ENCODE measurements at regions of chr7 and their contacts with region 1.

Region 1: DNA sequence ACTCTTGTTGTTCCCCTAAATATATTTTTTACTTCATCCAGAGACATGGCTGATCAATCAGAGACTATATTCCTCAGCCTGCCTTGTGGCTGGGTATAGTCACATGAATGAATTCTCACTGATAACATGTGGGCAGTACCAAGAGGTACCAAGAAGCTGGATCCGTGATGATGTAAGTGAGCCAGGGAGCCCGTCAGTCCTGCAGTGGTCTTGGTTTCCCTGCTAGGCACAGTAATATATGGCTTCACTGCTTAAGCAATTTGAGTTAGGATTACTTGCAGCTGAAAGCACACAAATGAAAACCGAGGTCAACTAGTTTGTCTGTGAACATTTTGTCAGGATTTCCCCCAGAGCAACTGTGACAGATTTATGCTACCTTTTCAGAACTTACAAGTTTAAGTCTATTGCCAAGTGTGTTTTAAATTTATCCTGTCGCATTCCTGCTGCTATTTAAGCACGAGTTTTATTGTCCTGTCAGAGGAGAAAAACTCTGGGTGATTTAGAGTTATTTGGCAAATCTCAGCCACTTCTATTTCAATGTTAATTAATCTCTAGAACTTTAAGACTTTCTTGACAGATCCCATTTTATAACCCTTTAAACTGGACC is 381.8 kb downstream of the PHF14 start:
- DNase-seq: no peak
- ATAC-seq: no peak
- H3K4me3 ChIP-seq: no peak overlapping the region
- H3K4me3 Mint-ChIP-seq: no peak overlapping the region
- H3K27ac ChIP-seq: no peak overlapping the region
- H3K27ac Mint-ChIP-seq: no peak overlapping the region
- H3K4me1 ChIP-seq: no peaks in the 10 kb centered on the region
- H3K4me1 Mint-ChIP-seq: no peaks in the 10 kb centered on the region
- H3K27me3 ChIP-seq: peaks cover 0 to 7% (median 0%) of the 10 kb centered on the region in 4 experiments
- H3K27me3 Mint-ChIP-seq: peaks cover 10% of the 10 kb centered on the region
- CTCF ChIP-seq: no peak

Region 2: DNA sequence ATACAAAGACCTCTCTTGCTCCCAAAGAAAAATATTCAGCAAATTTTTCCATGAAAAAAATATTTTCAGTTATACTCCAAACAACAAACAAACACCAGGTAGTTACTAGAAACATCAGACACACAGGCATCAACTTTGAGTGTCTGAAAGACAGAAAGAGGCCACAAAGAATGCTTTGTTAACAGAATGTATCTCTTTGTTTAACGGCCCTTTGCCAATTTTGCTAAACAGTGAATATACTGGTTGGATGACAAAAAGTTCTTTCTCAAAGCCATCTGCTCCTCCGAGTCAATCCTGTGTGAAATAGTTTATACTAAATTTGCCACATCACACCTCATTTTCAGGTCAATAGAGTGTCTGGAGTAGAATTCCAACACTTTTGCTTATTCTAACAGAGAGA is 598.5 kb before region 1 on chr7:
- CTCF ChIA-PET with region 1: no interaction called
- POLR2A ChIA-PET with region 1: no interaction called
- intact Hi-C with region 1: no loop called
- DNase-seq: no peak
- ATAC-seq: no peak
- H3K4me3 ChIP-seq: no peak overlapping the region
- H3K4me3 Mint-ChIP-seq: no peak overlapping the region
- H3K27ac ChIP-seq: no peak overlapping the region
- H3K27ac Mint-ChIP-seq: no peak overlapping the region
- H3K4me1 ChIP-seq: no peaks in the 10 kb centered on the region
- H3K4me1 Mint-ChIP-seq: no peaks in the 10 kb centered on the region
- H3K27me3 ChIP-seq: no peaks in the 10 kb centered on the region
- H3K27me3 Mint-ChIP-seq: no peaks in the 10 kb centered on the region
- CTCF ChIP-seq: no peak

Region 3: DNA sequence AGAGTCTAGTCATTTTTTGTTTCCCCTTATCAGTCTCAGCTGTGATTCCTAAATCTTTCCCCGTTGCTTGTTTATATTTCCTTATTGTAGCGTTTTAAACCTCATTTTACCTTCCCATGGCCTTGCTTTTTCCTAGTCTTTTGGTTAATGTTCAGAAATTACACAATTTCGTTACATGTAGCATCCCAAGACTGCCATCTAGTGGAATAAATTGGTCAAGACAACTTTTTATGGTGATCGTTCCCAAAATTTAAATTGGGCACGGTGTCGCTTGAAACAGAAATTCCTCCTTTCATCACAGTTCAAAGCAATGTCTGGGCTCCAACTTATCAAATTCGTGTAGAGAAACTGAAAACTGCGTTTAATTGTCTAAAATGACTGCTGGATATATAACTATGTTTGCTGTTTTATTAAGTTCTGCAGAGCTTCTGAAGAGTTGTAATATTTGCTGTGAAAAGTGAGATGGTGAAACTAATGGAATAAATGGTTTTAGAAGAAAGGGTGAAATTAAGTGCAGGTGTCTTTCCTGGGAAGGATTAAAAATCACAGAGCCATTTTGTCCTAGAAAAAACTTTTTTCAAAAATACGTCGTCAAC is 11.6 kb before region 1 on chr7:
- CTCF ChIA-PET with region 1: interaction called, 10 read pairs
- POLR2A ChIA-PET with region 1: no interaction called
- intact Hi-C with region 1: no loop called
- DNase-seq: peak; percentile 51
- ATAC-seq: peak; percentile 21
- H3K4me3 ChIP-seq: no peak overlapping the region
- H3K4me3 Mint-ChIP-seq: no peak overlapping the region
- H3K27ac ChIP-seq: no peak overlapping the region
- H3K27ac Mint-ChIP-seq: no peak overlapping the region
- H3K4me1 ChIP-seq: no peaks in the 10 kb centered on the region
- H3K4me1 Mint-ChIP-seq: peaks cover 2% of the 10 kb centered on the region
- H3K27me3 ChIP-seq: no peaks in the 10 kb centered on the region
- H3K27me3 Mint-ChIP-seq: peaks cover 4% of the 10 kb centered on the region
- CTCF ChIP-seq: peak; percentile 96

Region 4: DNA sequence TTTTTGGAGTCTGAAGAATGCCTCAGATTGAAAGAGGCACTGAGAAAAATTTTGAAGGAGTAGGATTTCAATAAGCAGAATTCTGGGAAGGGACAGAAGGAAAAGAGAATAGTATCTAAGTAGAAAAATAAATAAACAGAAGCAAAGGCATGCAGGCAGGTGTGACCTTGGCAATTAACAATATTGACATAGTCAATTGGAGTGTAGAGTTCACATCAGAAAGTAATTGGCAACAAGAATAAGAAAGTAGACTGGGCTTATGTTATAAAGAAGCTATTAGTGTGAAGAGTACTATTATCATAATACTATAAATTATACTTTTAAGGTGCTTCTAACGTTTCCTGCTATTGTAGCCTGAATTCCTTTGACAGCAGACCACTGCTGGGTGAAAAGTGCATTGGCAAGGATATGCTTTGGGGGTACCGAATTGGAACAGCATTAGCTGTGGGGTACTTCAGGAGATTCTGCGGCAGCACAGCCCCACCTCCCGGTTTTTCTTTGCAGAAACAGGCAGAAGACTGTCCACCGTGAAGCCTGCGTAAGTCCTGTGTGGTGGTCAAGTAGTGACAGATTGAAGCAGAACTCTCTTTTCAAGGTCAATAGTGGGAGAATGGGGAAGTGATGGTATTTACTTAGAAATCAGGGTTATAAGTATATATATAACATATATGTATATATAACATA is 119.5 kb after region 1 on chr7:
- CTCF ChIA-PET with region 1: no interaction called
- POLR2A ChIA-PET with region 1: no interaction called
- intact Hi-C with region 1: no loop called
- DNase-seq: no peak
- ATAC-seq: no peak
- H3K4me3 ChIP-seq: no peak overlapping the region
- H3K4me3 Mint-ChIP-seq: no peak overlapping the region
- H3K27ac ChIP-seq: no peak overlapping the region
- H3K27ac Mint-ChIP-seq: no peak overlapping the region
- H3K4me1 ChIP-seq: no peaks in the 10 kb centered on the region
- H3K4me1 Mint-ChIP-seq: no peaks in the 10 kb centered on the region
- H3K27me3 ChIP-seq: no peaks in the 10 kb centered on the region
- H3K27me3 Mint-ChIP-seq: no peaks in the 10 kb centered on the region
- CTCF ChIP-seq: no peak

Measured in B cell (primary cell).